Dendritic cell treated with granulocyte-macrophage colony-stimulating factor and Interleukin-4, amounts not matched to agents 40 ng/mL and 50 ng/mL, for 4 days (primary cell): ENCODE measurements at regions of chr20 and their contacts with region 1.

Region 1: DNA sequence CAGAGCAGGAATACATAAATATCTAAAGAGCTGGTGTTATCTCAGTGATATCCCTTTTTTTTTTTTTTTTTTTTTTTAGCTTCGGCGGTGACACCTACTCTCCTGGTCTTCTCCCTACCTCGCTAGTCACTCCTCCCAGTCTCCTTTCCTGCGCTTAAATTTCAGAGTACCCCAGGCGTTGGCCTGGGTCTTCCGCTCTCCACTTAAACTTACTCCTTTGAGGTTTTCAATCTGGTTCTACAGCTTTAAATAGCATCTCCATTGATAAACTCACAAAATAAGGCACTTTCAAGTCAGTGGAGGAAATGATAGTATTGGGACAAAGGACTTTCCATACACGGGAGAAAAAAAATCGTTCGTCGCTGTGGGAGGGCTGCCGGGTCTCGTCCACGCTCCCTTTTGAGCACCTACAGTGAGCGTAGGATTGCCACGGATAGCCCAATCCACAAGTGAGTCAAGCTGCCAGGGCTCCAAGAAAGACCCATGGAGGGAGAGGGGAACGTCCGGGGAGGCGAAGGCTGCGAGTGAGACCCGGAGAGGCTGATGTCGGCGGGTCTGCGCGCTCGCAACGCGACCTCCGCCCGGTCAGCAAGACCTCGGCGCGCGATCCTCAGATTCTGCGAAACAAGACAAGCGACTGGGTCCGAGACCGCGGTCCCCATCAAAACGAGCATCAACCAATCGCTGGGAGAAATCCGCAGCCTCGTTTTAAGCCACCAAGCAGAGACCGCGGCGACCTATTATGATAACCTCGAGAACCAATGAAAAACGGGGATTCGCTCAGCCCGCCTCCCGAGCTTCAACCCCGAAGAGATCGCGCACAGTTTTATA is 672 bp upstream of the SRSF6 start:
- H3K4me3 Mint-ChIP-seq: peak overlapping the region; percentile 94
- H3K27ac Mint-ChIP-seq: peak overlapping the region; percentile 99
- H3K4me1 Mint-ChIP-seq: peaks cover 19% of the 10 kb centered on the region
- H3K27me3 Mint-ChIP-seq: peaks cover 18% of the 10 kb centered on the region

Region 2: DNA sequence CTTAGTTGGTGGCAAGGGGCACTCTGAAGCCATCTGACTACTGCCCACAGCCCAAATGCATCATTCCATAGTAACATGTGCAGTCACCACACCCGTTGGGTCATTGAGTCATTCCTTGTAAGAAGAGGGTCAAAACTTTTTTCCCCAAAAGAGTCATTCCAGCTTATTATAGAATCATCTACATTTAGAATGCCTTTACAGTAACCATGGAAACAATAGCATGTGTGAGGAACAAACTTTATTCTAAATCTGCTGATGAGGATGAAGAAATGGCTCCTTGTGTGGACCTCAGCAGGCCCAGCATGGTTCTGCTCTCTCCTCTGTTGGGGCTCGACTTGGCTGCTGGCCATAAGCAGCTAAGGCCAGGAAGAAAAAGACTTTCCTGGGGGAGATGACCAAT is 156.1 kb before region 1 on chr20:
- intact Hi-C with region 1: no loop called
- H3K4me3 Mint-ChIP-seq: no peak overlapping the region
- H3K27ac Mint-ChIP-seq: no peak overlapping the region
- H3K4me1 Mint-ChIP-seq: no peaks in the 10 kb centered on the region
- H3K27me3 Mint-ChIP-seq: no peaks in the 10 kb centered on the region

Region 3: DNA sequence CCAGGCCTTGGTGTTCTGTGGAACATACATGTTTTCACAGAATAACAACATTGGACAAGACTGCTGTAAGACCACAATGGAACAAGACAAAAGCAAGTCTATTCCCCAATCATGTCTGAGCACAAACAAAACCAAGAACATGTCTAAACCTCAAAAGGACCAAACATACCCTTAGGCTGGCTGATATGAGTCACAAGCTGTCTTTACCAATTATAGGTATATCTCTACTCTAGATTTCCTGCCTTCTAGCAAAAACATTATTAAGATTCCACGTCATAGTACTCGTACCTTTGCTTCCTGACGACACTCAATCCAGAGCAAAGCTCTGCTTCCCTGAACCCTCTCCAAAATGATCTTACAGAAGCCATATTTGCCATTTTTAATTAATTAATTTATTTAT is 35.1 kb after region 1 on chr20:
- intact Hi-C with region 1: no loop called
- H3K4me3 Mint-ChIP-seq: no peak overlapping the region
- H3K27ac Mint-ChIP-seq: no peak overlapping the region
- H3K4me1 Mint-ChIP-seq: no peaks in the 10 kb centered on the region
- H3K27me3 Mint-ChIP-seq: peaks cover 6% of the 10 kb centered on the region

Region 4: DNA sequence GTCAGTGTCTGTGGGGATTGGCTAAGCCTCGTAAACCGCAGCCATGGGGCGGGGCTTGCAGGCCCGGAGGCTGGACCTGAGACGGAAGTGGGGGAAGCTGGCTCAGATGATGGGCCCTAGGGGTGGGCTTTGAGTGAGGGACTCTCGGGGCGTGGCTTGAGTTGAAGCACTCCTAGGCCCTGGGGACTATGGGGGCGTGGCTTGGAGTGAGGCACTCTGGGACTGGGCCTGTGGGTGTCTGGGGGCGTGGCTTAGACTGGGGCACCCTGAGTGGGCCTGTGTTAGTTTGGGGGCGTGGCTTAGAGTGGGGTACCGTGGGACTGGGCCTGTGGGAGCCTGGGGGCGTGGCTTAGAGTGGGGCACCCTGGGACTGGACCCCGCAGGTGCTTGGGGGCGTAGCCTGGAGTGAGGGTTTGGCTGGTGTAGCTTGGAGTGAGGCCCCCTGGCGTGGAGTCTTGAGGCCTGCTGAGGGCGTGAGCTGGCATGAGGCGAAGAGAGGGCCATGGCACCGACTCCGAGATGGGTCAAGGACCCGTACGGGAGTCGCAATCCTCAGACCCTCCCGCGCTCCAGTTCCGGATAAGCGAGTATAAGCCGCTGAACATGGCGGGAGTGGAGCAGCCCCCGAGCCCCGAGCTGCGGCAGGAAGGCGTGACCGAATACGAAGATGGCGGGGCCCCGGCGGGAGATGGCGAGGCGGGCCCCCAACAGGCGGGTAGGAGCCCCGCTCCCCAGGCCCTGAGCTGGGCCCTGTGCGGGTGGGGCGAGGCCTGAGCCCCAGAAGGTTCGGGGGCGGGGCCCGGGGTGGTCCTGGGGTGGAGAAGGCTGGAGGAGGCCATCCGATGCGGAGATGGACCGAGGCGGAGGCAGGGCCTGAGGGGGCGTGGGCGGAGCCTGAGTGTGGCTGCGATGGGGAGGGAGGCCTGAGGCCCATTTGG is 57.3 kb after region 1 on chr20:
- intact Hi-C with region 1: loop called (anchors 1 kb)
- H3K4me3 Mint-ChIP-seq: peak overlapping the region; percentile 93
- H3K27ac Mint-ChIP-seq: peak overlapping the region; percentile 85
- H3K4me1 Mint-ChIP-seq: peaks cover 15% of the 10 kb centered on the region
- H3K27me3 Mint-ChIP-seq: peaks cover 4% of the 10 kb centered on the region